ENCODE measurements at regions of chr2 and their contacts with region 1.

Region 1: DNA sequence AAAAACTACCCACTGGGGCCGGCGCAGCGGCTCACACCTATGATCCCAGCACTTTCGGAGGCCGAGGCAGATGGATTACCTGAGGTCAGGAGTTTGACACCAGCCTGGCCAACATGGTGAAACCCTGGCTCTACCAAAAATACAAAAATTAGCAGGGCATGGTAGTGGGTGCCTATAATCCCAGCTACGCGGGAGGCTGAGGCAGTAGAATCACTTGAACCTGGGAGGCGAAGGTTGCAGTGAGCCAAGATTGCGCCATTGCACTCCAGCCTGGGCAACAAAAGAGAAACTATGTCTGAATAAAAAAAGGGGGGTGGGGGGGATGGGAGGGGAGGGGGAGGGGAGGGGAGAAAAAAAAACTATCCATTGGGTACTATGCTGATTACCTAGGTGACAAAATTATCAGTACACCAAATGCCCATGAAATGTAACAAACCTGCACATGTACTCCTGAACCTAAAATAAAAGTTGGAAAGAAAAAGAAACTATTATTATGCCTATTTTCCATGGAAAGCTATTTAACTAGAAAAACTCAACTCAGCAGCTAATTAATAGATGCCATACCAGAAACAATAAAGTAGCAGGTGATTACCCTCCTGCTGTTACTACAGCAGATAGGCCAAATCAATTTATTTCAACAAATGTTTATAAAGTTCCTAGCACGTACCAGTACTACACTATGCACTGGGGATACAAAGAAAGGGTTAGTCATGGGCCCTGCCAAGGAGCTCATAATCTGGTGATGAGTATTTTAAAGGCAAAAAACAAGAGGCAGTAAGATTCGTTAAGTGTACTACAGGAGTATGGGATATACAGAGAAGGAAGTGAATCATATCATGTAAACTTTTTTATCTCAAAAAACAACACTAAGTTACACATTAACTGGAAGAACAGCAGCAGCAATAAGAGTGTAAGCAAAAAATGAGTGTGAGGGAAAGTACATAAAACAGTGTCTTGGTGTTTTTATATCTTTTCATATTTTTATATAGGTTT is 112.8 kb upstream of the SLC39A10 start:
- DNase-seq: no peak
- H3K4me3 Mint-ChIP-seq: peak overlapping the region; percentile 32
- H3K27ac Mint-ChIP-seq: peak overlapping the region; percentile 88
- H3K4me1 Mint-ChIP-seq: peaks cover 83% of the 10 kb centered on the region
- H3K27me3 Mint-ChIP-seq: no peaks in the 10 kb centered on the region

Region 2: DNA sequence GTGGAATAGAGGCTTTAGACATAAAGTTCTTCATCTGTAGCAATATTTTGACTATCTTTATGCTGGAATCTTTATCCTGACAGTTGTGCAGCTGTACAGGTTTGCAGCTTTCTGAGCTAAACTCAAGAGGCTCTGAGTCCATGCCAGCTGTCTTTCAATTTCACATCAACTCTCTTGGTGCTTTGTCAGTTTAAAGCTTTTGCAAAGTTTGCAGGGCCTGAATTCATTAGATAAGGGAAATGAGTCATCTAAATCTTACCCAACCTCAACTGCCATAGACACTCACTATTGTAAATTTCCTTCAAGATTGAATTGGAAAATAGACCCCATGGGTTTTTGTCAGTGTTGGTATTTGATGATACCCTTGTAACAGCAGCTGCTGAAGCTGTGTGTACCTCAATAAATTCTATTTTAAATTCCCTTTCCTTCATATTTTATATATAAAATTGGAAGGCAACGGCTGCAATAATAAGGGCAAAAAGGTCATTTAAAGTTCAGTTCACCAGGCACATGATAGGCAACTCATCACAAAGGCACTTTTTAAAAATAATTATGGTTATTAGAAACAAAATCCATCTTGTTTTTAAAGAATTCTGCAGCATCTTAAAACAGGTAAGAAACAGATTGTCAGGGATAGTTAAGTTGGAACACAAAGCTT is 57.1 kb before region 1 on chr2:
- intact Hi-C with region 1: loop called (anchors 1 kb)
- DNase-seq: peak; percentile 26
- H3K4me3 Mint-ChIP-seq: peak overlapping the region; percentile 32
- H3K27ac Mint-ChIP-seq: peak overlapping the region; percentile 61
- H3K4me1 Mint-ChIP-seq: peaks cover 56% of the 10 kb centered on the region
- H3K27me3 Mint-ChIP-seq: no peaks in the 10 kb centered on the region

Region 3: DNA sequence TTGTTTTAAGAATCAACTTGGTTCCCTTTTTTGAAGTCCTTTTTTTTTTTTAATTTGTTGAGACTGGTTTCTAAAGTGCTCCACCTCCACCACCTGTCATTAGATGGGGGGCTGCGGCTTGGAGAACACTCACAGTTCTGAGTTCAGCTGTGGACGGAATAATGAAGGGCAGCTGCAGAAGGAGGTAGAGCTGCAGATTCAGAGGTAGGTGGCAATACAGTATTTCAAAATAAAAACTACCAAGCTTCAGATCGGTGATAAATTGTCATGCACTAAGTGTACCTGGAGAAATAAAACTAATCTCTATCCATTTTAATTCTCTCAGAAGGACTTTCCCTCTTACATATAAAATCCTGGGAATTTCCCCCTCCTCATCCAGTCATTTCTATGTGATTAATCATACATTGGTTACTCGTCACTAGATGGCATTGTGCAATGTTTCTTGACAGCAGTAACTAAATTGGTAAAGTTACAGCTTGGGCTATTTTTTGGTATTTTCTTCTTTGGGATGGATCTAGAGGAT is 31.7 kb after region 1 on chr2:
- intact Hi-C with region 1: loop called (anchors 1 kb)
- DNase-seq: no peak
- H3K4me3 Mint-ChIP-seq: no peak overlapping the region
- H3K27ac Mint-ChIP-seq: peak overlapping the region; percentile 13
- H3K4me1 Mint-ChIP-seq: peaks cover 58% of the 10 kb centered on the region
- H3K27me3 Mint-ChIP-seq: no peaks in the 10 kb centered on the region

Region 4: DNA sequence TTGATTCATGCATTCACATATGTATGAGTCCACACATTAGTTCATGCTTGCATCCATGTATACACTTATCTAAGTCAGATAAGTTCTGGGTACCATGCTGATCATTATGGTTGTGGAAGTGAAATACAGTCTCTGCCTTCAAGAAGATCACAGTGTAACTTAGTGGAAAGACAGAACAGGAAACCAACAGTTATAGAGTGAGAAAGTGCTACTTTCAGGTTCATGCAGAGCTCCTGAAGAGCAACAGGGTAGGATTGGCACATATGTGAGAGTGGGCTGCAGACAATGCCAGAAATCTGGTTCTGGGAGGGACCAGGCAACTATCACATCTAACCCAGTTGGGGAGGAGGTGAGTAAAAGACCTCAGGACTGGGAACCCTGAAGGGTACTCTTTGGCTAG is 1417.7 kb after region 1 on chr2:
- intact Hi-C with region 1: loop called (anchors 1 kb)
- DNase-seq: no peak
- H3K4me3 Mint-ChIP-seq: peak overlapping the region; percentile 13
- H3K27ac Mint-ChIP-seq: peak overlapping the region; percentile 57
- H3K4me1 Mint-ChIP-seq: peaks cover 40% of the 10 kb centered on the region
- H3K27me3 Mint-ChIP-seq: no peaks in the 10 kb centered on the region